WTC11 (cell line): ENCODE measurements at regions of chr1 and their contacts with region 1.

Region 1: DNA sequence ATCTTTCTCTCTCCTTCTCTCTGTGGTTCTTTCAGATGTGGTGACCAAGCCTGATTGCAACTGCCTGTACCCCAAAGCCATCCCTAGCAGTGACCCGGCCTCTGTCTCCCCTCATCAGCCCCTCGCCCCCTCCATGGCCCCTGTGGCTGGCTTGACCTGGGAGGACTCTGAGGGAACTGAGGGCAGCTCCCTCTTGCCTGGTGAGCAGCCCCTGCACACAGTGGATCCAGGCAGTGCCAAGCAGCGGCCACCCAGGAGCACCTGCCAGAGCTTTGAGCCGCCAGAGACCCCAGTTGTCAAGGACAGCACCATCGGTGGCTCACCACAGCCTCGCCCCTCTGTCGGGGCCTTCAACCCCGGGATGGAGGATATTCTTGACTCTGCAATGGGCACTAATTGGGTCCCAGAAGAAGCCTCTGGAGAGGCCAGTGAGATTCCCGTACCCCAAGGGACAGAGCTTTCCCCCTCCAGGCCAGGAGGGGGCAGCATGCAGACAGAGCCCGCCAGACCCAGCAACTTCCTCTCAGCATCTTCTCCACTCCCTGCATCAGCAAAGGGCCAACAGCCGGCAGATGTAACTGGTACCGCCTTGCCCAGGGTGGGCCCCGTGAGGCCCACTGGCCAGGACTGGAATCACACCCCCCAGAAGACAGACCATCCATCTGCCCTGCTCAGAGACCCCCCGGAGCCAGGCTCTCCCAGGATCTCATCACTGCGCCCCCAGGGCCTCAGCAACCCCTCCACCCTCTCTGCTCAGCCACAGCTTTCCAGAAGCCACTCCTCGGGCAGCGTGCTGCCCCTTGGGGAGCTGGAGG is 12.7 kb downstream of the CSF1 start:
- DNase-seq: peak; percentile 73
- ATAC-seq: peak; percentile 96
- H3K4me3 Mint-ChIP-seq: 0 out of 2 replicates have a peak overlapping the region, but pooled peaks have one; percentile 16
- H3K27ac Mint-ChIP-seq: no peak overlapping the region
- H3K4me1 Mint-ChIP-seq: no peaks in the 10 kb centered on the region
- H3K27me3 Mint-ChIP-seq: no peaks in the 10 kb centered on the region
- CTCF ChIP-seq: peak; percentile 72

Region 2: GRCh38 chr1:109877320-109877771 is 46.0 kb before region 1 on chr1:
- CTCF ChIA-PET with region 1: interaction called, 13 read pairs
- POLR2A ChIA-PET with region 1: no interaction called
- DNase-seq: peak; percentile 64
- ATAC-seq: peak; percentile 88
- H3K4me3 Mint-ChIP-seq: no peak overlapping the region
- H3K27ac Mint-ChIP-seq: peak overlapping the region; percentile 89
- H3K4me1 Mint-ChIP-seq: peaks cover 65% of the 10 kb centered on the region
- H3K27me3 Mint-ChIP-seq: no peaks in the 10 kb centered on the region
- CTCF ChIP-seq: no peak

Region 3: DNA sequence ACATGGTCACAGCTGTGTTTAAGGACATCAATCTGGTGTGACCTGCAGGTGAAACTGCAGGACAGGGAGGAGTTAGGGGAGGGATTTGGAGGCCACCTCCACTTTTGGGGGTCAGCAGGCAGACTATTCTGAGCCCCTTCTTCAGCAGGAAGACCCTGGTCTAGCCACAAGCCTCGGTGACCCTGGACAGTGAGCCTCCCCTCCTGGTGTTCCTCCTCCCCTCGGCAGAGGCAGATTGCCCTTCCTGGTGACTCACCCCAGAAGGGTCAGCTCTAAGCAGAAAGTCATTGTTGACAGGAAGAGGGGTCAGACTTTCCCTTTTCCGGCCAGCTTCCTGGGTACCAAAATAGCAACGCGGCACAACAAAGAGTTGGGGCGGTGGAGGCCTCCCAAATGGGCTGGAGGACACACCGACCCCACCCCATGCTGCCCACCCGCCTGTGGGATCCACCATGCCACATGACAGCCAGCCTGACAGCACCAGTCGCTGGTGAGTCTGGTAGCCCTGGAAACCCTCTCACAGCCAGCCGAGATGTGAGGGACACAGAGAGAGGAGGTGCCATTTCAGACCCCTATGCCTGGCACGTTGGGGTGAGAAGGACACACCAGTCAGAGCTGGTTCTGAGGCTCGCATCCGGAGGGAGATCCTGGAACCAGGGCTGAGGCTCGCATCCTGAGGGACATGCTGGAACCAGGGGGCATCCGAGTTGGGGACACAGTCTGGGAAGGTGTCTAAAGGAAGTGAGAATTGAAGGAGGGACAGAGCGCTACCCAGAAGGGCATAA is 27.4 kb before region 1 on chr1:
- CTCF ChIA-PET with region 1: interaction called, 11 read pairs
- POLR2A ChIA-PET with region 1: no interaction called
- DNase-seq: no peak
- ATAC-seq: no peak
- H3K4me3 Mint-ChIP-seq: no peak overlapping the region
- H3K27ac Mint-ChIP-seq: no peak overlapping the region
- H3K4me1 Mint-ChIP-seq: no peaks in the 10 kb centered on the region
- H3K27me3 Mint-ChIP-seq: peaks cover 5% of the 10 kb centered on the region; the same call in 1 of the 2 replicates
- CTCF ChIP-seq: no peak

Region 4: GRCh38 chr1:109910123-109910962 is 13.0 kb before region 1 on chr1 and contains the start of gene CSF1:
- CTCF ChIA-PET with region 1: interaction called, 14 read pairs
- POLR2A ChIA-PET with region 1: interaction called, 3 read pairs
- DNase-seq: peak; percentile 55
- ATAC-seq: peak; percentile 62
- H3K4me3 Mint-ChIP-seq: peak within 1 kb of the TSS; percentile 82
- H3K27ac Mint-ChIP-seq: no peak within 1 kb of the TSS
- H3K4me1 Mint-ChIP-seq: peaks cover 31% of the 10 kb centered on the region
- H3K27me3 Mint-ChIP-seq: peaks cover 56% of the 10 kb centered on the region
- CTCF ChIP-seq: no peak
- total RNA-seq, gene CSF1: 2.5 to 3.3 TPM (median 3.0 TPM) in 3 replicates

Region 5: GRCh38 chr1:109959974-109960744 is 36.8 kb after region 1 on chr1:
- CTCF ChIA-PET with region 1: interaction called, 10 read pairs
- POLR2A ChIA-PET with region 1: no interaction called
- DNase-seq: peak; percentile 26
- ATAC-seq: peak; percentile 93
- H3K4me3 Mint-ChIP-seq: peak overlapping the region; percentile 11
- H3K27ac Mint-ChIP-seq: peak overlapping the region; percentile 50
- H3K4me1 Mint-ChIP-seq: peaks cover 36% of the 10 kb centered on the region
- H3K27me3 Mint-ChIP-seq: peaks cover 73% of the 10 kb centered on the region
- CTCF ChIP-seq: no peak